Activated CD4-positive, alpha-beta memory T cell treated with anti-CD3 and anti-CD28 coated beads for 36 hours (primary cell): ENCODE measurements at regions of chr5 and their contacts with region 1.

Region 1: GRCh38 chr5:140710899-140711552 is 10.8 kb downstream of the ZMAT2 start:
- DNase-seq: peak; percentile 93
- H3K4me3 Mint-ChIP-seq: peak overlapping the region; percentile 89
- H3K27ac Mint-ChIP-seq: peak overlapping the region; percentile 89
- H3K4me1 Mint-ChIP-seq: peaks cover 12% of the 10 kb centered on the region
- H3K27me3 Mint-ChIP-seq: no peaks in the 10 kb centered on the region

Region 2: DNA sequence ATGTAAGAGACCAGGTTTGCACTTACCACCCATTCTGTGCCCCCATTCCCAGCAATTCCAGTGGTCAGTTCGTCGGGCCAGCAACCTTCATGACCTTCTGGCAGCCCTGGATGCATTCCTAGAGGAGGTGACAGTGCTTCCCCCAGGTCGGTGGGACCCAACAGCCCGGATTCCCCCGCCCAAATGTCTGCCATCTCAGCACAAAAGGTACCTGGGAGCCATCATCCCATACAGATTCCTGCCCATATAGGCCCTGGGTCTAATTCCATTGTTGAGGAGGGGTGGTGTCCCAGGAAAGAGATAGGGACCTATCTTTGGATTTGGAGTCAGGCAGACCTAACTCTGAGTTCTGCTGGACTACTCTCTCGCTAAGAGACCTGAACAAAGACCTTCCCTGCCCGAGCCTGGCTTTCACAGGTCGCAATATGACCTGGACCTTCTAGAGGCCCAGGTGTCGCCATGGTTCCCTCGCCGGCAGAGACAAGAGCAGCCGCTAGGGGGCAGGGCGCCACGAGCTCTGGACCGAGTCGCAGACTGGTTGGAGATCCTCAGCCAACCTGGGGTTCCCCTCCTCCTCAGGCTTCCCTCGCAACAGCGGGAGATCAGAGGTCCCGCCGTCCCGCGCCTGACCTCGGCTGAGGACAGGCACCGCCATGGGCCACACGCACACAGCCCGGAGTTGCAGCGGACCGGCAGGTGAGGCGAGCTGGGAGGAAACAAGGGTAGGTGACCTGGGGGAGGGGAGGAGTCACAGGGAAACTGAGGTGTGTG is 348.0 kb before region 1 on chr5:
- CTCF ChIA-PET with region 1: interaction called, 6 read pairs
- POLR2A ChIA-PET with region 1: no interaction called
- intact Hi-C with region 1: loop called (anchors 5 kb)
- DNase-seq: peak; percentile 91
- H3K4me3 Mint-ChIP-seq: peak overlapping the region; percentile 72
- H3K27ac Mint-ChIP-seq: peak overlapping the region; percentile 52
- H3K4me1 Mint-ChIP-seq: peaks cover 4% of the 10 kb centered on the region
- H3K27me3 Mint-ChIP-seq: peaks cover 3% of the 10 kb centered on the region

Region 3: GRCh38 chr5:140564196-140565023 is 146.6 kb before region 1 on chr5 and contains the starts of genes APBB3 and SLC35A4:
- CTCF ChIA-PET with region 1: no interaction called
- POLR2A ChIA-PET with region 1: no interaction called
- intact Hi-C with region 1: loop called (anchors 1 kb)
- DNase-seq: peak; percentile 98
- H3K4me3 Mint-ChIP-seq: peak within 1 kb of the TSS; percentile 91
- H3K27ac Mint-ChIP-seq: peak within 1 kb of the TSS; percentile 93
- H3K4me1 Mint-ChIP-seq: peaks cover 47% of the 10 kb centered on the region
- H3K27me3 Mint-ChIP-seq: no peaks in the 10 kb centered on the region
- total RNA-seq, gene APBB3: 16.3 to 16.8 TPM
- total RNA-seq, gene SLC35A4: 68.7 to 69.7 TPM

Region 4: DNA sequence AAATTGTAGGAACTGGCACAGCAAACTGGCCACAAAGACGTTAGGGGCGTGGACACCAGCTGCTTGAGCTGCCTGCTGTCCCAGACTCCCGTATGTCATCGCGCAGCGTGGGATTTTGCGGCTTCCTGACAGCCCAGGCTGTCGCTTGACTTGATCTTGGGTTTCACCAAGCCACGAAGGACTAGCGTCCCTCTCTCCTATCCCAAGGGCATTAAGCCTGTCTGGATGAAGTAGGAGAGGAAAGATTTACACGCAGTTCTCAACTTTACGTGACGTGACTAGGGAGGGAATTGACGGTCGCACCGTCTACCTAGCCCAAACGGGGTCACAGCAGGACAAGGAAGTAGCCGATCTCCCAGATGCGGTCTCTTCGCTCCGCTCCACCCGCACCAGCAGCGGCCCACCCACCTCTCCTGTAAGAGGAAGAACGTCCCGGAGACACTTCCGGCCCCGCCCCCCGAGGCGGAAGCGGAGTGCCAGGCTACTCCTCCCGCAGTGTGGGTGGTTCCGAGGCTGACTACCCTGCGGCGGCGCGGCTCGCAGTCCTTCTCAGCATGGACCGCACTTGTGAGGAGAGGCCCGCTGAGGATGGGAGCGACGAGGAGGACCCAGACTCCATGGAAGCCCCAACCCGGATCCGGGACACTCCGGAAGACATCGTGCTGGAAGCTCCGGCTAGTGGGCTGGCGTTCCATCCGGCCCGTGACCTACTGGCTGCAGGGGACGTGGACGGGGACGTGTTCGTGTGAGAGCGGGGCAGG is 46.5 kb before region 1 on chr5 and contains the start of gene WDR55:
- CTCF ChIA-PET with region 1: interaction called, 3 read pairs
- POLR2A ChIA-PET with region 1: interaction called, 5 read pairs
- intact Hi-C with region 1: loop called (anchors 1 kb)
- DNase-seq: peak; percentile 98
- H3K4me3 Mint-ChIP-seq: peak within 1 kb of the TSS; percentile 99
- H3K27ac Mint-ChIP-seq: peak within 1 kb of the TSS; percentile 94
- H3K4me1 Mint-ChIP-seq: peaks cover 27% of the 10 kb centered on the region
- H3K27me3 Mint-ChIP-seq: no peaks in the 10 kb centered on the region
- total RNA-seq, gene WDR55: 30.4 to 32.1 TPM

Region 5: GRCh38 chr5:140700177-140701144 is 10.6 kb before region 1 on chr5 and contains the start of gene ZMAT2:
- CTCF ChIA-PET with region 1: interaction called, 3 read pairs
- POLR2A ChIA-PET with region 1: interaction called, 15 read pairs
- intact Hi-C with region 1: loop called (anchors 1 kb)
- DNase-seq: peak; percentile 97
- H3K4me3 Mint-ChIP-seq: peak within 1 kb of the TSS; percentile 97
- H3K27ac Mint-ChIP-seq: peak within 1 kb of the TSS; percentile 90
- H3K4me1 Mint-ChIP-seq: peaks cover 28% of the 10 kb centered on the region
- H3K27me3 Mint-ChIP-seq: no peaks in the 10 kb centered on the region
- total RNA-seq, gene ZMAT2: 51.4 to 53.4 TPM

Region 6: DNA sequence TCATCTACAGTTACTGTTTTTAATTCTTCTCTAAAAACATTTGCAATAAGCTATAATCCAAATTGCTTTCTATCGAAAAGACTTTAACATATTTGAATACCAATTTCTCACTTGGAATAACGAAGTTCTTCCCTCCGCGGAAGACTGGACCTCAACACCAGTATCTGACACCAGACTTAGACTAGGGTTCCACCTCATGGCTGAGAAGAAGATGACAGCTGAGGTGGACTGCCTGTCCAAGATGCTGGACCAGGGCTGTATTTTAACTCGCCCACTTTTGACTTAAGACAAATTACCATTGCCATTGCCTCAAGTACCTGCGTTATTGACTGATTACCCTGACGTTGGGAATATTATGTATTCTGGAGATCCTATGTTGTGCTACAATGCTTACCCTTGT is 23.3 kb after region 1 on chr5:
- CTCF ChIA-PET with region 1: no interaction called
- POLR2A ChIA-PET with region 1: no interaction called
- intact Hi-C with region 1: no loop called
- DNase-seq: no peak
- H3K4me3 Mint-ChIP-seq: no peak overlapping the region
- H3K27ac Mint-ChIP-seq: no peak overlapping the region
- H3K4me1 Mint-ChIP-seq: no peaks in the 10 kb centered on the region
- H3K27me3 Mint-ChIP-seq: peaks cover 33% of the 10 kb centered on the region